Activated CD4-positive, alpha-beta T cell treated with anti-CD3 and anti-CD28 coated beads for 36 hours (primary cell): ENCODE measurements at regions of chr6 and their contacts with region 1.

Region 1: DNA sequence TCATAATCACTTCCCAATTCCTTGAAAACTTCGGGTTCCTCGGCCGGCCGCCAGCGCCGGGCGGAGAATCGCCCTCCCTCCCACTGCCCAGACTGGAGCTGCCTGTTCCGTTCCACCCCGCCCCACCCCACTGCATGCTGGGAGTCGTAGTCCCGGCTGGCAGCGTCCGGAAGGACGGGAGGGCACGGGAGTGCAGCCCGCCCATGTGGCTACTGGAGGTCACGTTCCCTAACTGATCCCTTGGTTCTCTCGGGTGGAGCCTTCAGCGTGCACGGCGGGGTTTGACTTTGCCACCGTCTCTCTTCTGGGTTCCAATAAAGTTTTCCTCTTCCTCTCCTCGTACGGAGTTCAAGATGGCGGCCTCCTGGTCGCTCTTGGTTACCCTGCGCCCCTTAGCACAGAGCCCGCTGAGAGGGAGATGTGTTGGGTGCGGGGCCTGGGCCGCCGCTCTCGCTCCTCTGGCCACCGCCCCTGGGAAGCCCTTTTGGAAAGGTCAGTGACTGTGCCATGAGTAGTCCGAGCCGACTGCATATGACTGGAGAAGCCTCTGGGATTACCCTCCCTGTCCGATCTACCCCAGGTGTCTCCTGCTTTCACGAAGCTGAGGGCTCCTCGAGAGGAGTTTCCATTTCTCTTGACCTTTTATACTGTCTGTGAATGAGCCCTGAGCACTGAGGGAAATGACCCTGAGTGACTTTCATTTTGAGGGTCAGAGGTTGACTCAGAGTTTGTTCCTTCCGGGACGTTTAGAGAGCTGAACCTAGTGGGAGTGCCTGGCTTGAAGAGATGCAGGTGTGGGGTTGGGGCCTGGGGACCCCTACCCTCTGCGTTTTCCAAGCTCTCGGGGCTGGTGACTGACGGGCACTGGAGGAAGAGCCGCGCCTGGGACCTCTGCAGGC is at the start of gene AFG1L:
- DNase-seq: peak; percentile 93
- ATAC-seq: peak; percentile 92
- H3K4me3 Mint-ChIP-seq: peak within 1 kb of the TSS; percentile 99
- H3K27ac Mint-ChIP-seq: peak within 1 kb of the TSS; percentile 100
- H3K4me1 Mint-ChIP-seq: peaks cover 13% of the 10 kb centered on the region
- H3K27me3 Mint-ChIP-seq: no peaks in the 10 kb centered on the region
- total RNA-seq, gene AFG1L: 6.6 TPM

Region 2: DNA sequence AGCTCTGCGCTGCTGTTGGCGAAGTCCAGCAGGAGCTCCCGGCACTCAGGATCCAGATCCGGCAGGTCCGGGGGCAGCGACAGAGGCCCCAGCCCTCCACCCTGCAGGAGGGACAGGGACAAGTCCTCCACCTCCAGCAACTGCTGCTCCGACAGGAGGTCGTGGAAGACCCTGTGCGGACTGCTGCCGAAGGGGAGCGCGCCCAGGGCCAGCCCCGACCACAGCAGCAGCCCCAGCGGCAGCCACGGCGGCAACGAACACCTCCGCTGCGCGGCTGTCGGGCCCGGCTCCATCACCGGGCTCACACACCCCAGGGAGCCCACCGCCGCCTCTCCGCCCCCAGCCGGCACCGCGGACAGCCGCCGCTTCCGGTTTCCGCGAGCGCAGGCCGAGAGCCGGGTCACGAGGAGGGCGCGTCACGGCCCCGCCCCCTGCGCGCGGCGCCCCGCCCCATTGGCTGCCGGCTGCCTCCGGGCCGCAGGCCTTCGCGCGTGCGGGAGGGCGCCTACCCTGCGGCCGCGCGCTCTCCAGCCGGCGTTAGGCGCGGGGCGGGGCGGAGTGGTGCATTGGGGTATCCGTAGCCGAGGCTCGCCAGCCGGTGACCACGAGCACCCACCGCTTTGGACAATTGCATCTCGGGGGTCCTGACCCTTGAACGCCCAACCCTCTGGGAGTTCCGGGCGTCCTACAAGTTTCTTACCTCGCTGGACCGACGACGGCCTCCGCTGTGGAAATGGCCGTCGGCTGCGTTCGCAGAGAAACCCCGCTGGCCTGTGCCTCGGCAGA is 220.4 kb before region 1 on chr6 and contains the start of gene OSTM1:
- CTCF ChIA-PET with region 1: no interaction called
- POLR2A ChIA-PET with region 1: no interaction called
- intact Hi-C with region 1: loop called in 1 of 2 experiments (anchors 1 kb)
- DNase-seq: peak; percentile 96
- ATAC-seq: peak; percentile 98
- H3K4me3 Mint-ChIP-seq: peak within 1 kb of the TSS; percentile 76
- H3K27ac Mint-ChIP-seq: peak within 1 kb of the TSS; percentile 80
- H3K4me1 Mint-ChIP-seq: peaks cover 19% of the 10 kb centered on the region
- H3K27me3 Mint-ChIP-seq: peaks cover 3% of the 10 kb centered on the region
- total RNA-seq, gene OSTM1: 5.5 to 7.3 TPM

Region 3: GRCh38 chr6:108163267-108163643 is 131.7 kb before region 1 on chr6:
- CTCF ChIA-PET with region 1: no interaction called
- POLR2A ChIA-PET with region 1: no interaction called
- intact Hi-C with region 1: no loop called
- DNase-seq: no peak
- ATAC-seq: peak; percentile 71
- H3K4me3 Mint-ChIP-seq: no peak overlapping the region
- H3K27ac Mint-ChIP-seq: no peak overlapping the region
- H3K4me1 Mint-ChIP-seq: peaks cover 27% of the 10 kb centered on the region
- H3K27me3 Mint-ChIP-seq: peaks cover 85% of the 10 kb centered on the region

Region 4: GRCh38 chr6:108222504-108222903 is 72.5 kb before region 1 on chr6:
- CTCF ChIA-PET with region 1: no interaction called
- POLR2A ChIA-PET with region 1: no interaction called
- intact Hi-C with region 1: no loop called
- DNase-seq: no peak
- ATAC-seq: peak; percentile 33
- H3K4me3 Mint-ChIP-seq: no peak overlapping the region
- H3K27ac Mint-ChIP-seq: no peak overlapping the region
- H3K4me1 Mint-ChIP-seq: peaks cover 14% of the 10 kb centered on the region
- H3K27me3 Mint-ChIP-seq: no peaks in the 10 kb centered on the region

Region 5: GRCh38 chr6:108348655-108349349 is 53.8 kb after region 1 on chr6:
- CTCF ChIA-PET with region 1: interaction called, 4 read pairs
- POLR2A ChIA-PET with region 1: no interaction called
- intact Hi-C with region 1: loop called in 1 of 2 experiments (anchors 2 kb)
- DNase-seq: no peak
- ATAC-seq: peak; percentile 96
- H3K4me3 Mint-ChIP-seq: no peak overlapping the region
- H3K27ac Mint-ChIP-seq: peak overlapping the region; percentile 71
- H3K4me1 Mint-ChIP-seq: peaks cover 9% of the 10 kb centered on the region
- H3K27me3 Mint-ChIP-seq: no peaks in the 10 kb centered on the region